HEK293 (cell line): ENCODE measurements at regions of chr2 and their contacts with region 1.

Region 1: DNA sequence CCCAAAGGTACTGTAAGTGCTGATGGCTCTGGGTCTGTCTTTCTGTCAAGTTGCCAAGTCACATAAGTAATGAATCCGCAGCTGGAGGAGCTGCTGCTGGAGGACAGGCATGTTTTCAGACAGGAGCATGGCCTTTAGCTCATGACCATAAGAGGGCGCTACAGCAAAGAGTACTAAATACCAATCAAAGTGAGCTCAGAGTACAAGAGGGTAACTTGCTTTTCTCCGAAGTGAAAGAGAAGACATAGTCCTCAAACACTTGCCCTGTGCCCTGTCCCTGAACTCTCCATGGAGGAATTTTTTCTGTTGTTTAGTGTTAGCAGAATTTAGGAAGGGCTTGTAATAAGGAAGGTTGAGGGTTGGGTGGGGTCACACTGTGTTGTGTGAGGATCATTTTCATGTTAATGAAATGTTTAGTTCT is 58.0 kb upstream of the EML6 start:
- H3K4me3 ChIP-seq: no peak overlapping the region
- H3K27ac ChIP-seq: no peak overlapping the region
- H3K4me1 ChIP-seq: no peaks in the 10 kb centered on the region
- CTCF ChIP-seq: 0 out of 2 replicates have a peak, but pooled peaks have one; percentile 17

Region 2: GRCh38 chr2:53952519-53952918 is 712.9 kb before region 1 on chr2:
- CTCF ChIA-PET with region 1: no interaction called
- POLR2A ChIA-PET with region 1: no interaction called
- H3K4me3 ChIP-seq: no peak overlapping the region
- H3K27ac ChIP-seq: no peak overlapping the region
- H3K4me1 ChIP-seq: peaks cover 12% of the 10 kb centered on the region; the same call in 1 of the 2 replicates
- CTCF ChIP-seq: no peak

Region 3: DNA sequence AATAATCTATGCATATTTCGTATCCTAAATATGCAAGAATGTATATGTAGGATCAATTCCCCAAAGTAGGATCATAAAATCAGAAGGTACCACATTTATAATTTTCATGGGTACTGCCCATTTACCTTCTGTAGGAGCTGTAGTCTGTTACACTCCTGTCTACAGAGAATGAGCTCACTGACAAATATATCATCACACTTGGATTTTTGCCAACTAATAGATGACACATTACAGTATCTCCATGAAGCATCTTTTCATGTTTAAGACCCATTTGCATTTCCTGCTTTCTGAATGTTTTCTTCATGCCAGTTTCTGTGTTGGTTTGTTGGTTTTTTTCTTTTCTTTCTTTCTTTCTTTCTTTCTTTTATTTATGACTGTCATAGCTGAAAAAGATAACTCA is 12.9 kb before region 1 on chr2:
- CTCF ChIA-PET with region 1: interaction called, 22 read pairs
- POLR2A ChIA-PET with region 1: no interaction called
- H3K4me3 ChIP-seq: no peak overlapping the region
- H3K27ac ChIP-seq: no peak overlapping the region
- H3K4me1 ChIP-seq: no peaks in the 10 kb centered on the region
- CTCF ChIP-seq: no peak

Region 4: DNA sequence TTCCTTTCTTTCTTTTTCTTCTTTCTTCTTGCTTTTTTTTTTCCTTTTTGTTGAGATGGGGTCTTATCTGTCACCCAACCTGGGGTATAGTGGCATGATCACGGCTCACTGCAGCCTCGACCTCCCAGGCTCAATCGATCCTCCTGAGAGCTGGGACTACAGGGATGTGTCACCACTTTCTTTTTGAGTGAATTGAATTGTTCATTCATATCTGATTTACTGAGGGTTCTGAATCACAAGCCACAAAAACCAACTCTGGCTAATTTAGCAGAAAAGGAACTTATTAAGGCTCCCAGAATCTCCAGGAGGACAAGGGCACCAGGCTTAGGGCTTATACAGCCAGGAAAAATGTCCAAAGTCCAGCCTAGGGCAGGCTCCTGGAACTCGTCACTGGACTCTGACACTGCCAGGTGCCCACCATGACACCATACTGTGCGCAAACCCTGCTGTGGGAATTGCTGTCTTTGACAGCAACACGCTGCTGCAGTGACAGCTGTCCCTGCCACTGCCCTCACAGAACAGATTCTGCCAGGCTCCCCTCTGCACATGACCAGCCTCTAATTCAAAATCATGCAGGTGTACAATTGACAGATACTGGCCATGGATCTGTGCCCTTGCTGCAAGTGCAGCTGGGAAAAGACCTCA is 15.1 kb after region 1 on chr2:
- CTCF ChIA-PET with region 1: interaction called, 39 read pairs
- POLR2A ChIA-PET with region 1: no interaction called
- H3K4me3 ChIP-seq: no peak overlapping the region
- H3K27ac ChIP-seq: no peak overlapping the region
- H3K4me1 ChIP-seq: no peaks in the 10 kb centered on the region
- CTCF ChIP-seq: no peak

Region 5: GRCh38 chr2:54697934-54698333 is 32.5 kb after region 1 on chr2:
- CTCF ChIA-PET with region 1: interaction called, 64 read pairs
- POLR2A ChIA-PET with region 1: no interaction called
- H3K4me3 ChIP-seq: no peak overlapping the region
- H3K27ac ChIP-seq: no peak overlapping the region
- H3K4me1 ChIP-seq: no peaks in the 10 kb centered on the region
- CTCF ChIP-seq: no peak

Region 6: DNA sequence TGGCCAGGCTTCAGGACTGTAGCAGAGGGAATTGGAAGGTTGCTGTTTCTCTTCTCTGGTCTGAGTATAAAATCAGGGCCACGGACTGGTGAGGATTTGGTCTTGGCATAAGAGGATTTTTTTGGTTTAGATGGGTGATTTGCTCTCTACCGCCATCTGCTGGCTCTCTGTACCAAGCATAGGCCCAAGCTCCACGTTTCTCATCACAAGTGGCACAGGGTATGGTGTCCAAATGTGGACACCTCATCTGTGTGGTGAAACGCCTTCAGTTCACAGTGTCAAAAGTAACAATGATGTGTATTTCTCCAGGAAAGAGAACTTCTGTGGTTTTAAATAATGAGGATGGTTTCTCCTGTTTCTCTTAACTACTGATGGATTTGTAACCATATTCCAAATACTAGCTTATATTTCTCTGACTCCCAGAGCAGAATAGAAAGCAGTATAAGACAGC is 173.2 kb after region 1 on chr2:
- CTCF ChIA-PET with region 1: interaction called, 24 read pairs
- POLR2A ChIA-PET with region 1: no interaction called
- H3K4me3 ChIP-seq: no peak overlapping the region
- H3K27ac ChIP-seq: no peak overlapping the region
- H3K4me1 ChIP-seq: no peaks in the 10 kb centered on the region
- CTCF ChIP-seq: peak; percentile 72

Region 7: DNA sequence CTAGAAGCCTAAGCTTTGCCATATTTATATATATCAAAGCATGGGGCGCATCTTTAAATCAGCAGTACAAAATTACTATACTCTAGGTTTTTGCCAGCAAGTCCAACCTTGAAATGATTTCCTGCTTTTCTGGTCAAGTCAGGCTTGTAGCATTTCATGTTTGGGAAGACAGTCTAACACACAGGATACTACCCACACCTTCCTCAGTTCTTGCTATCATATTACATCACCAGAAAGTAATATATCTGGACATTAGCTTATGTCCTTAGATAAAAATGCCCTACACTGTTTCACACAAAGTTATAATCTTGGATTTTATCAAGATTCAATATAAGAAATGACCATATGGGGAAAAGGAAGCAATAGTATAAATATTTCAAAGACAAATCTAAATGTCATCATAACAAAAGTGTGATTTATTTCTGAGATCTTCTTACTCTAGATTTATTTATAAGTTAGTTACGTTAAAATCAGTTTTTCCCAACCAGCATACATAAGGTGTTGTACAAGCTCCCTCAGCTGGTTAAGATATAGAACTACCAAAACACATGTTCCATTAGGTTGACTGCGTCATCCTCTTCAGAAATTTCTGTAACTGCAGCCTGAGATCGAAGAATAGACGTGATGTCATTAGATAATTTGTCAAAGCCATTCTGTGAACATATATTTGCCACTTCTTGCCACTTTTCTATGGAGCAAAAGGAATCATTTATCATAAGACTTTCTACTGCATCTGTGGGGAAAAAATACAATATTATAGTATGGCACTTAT is 510.0 kb after region 1 on chr2:
- CTCF ChIA-PET with region 1: interaction called, 19 read pairs
- POLR2A ChIA-PET with region 1: no interaction called
- H3K4me3 ChIP-seq: no peak overlapping the region
- H3K27ac ChIP-seq: no peak overlapping the region
- H3K4me1 ChIP-seq: no peaks in the 10 kb centered on the region
- CTCF ChIP-seq: no peak